ENCODE measurements at regions of chr2 and their contacts with region 1.

Region 1: DNA sequence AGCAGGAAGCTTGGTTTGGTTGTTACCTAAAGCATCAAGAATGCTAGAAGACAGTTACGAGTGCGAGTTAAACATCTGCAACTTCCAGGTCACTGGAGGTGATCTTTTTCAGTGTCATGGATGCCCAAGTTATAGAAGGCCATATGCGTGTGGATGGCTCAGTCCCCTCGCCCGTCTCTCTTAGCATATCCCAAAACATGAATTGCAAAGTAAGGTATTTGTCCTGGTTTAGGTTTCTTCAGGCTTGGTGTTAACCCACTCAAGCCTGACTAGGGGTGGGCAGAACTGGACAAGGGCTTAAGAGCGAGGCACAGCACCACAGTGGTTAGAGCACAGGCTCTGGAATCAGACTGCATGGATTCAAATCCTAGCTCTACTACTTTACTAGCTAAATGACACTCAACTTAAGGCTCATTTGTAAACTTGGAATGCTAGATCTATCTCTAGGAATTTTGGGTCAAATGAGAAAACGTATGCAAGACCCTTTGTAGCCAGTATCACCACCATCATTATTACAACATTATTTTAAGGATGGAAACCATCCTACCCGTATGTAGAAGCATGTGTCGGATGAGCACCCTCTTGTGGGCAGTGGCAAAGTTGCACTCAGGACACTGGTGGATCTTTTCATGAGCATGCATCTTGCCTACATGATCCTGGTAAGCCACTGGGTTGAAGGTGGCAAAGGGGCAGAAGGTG is 11.2 kb downstream of the ZNF142 start:
- DNase-seq: no peak
- H3K4me3 ChIP-seq: no peak overlapping the region
- CTCF ChIP-seq: peak; percentile 84

Region 2: GRCh38 chr2:218312267-218312756 is 335.9 kb before region 1 on chr2:
- CTCF ChIA-PET with region 1: no interaction called
- POLR2A ChIA-PET with region 1: no interaction called
- DNase-seq: no peak
- H3K4me3 ChIP-seq: no peak overlapping the region
- CTCF ChIP-seq: no peak

Region 3: GRCh38 chr2:218438601-218438995 is 209.6 kb before region 1 on chr2:
- CTCF ChIA-PET with region 1: no interaction called
- POLR2A ChIA-PET with region 1: no interaction called
- DNase-seq: no peak
- H3K4me3 ChIP-seq: no peak overlapping the region
- CTCF ChIP-seq: no peak

Region 4: GRCh38 chr2:218569038-218569431 is 79.2 kb before region 1 on chr2:
- CTCF ChIA-PET with region 1: interaction called, 10 read pairs
- POLR2A ChIA-PET with region 1: no interaction called
- DNase-seq: no peak
- H3K4me3 ChIP-seq: peak overlapping the region; percentile 78
- CTCF ChIP-seq: no peak

Region 5: GRCh38 chr2:218607436-218608115 is 40.7 kb before region 1 on chr2 and contains the start of gene PLCD4:
- CTCF ChIA-PET with region 1: interaction called, 10 read pairs
- POLR2A ChIA-PET with region 1: no interaction called
- DNase-seq: peak; percentile 16
- H3K4me3 ChIP-seq: peak within 1 kb of the TSS; percentile 51
- CTCF ChIP-seq: no peak

Region 6: GRCh38 chr2:218631837-218632236 is 16.4 kb before region 1 on chr2:
- CTCF ChIA-PET with region 1: interaction called, 15 read pairs
- POLR2A ChIA-PET with region 1: interaction called, 4 read pairs
- DNase-seq: no peak
- H3K4me3 ChIP-seq: no peak overlapping the region
- CTCF ChIP-seq: no peak

Region 7: DNA sequence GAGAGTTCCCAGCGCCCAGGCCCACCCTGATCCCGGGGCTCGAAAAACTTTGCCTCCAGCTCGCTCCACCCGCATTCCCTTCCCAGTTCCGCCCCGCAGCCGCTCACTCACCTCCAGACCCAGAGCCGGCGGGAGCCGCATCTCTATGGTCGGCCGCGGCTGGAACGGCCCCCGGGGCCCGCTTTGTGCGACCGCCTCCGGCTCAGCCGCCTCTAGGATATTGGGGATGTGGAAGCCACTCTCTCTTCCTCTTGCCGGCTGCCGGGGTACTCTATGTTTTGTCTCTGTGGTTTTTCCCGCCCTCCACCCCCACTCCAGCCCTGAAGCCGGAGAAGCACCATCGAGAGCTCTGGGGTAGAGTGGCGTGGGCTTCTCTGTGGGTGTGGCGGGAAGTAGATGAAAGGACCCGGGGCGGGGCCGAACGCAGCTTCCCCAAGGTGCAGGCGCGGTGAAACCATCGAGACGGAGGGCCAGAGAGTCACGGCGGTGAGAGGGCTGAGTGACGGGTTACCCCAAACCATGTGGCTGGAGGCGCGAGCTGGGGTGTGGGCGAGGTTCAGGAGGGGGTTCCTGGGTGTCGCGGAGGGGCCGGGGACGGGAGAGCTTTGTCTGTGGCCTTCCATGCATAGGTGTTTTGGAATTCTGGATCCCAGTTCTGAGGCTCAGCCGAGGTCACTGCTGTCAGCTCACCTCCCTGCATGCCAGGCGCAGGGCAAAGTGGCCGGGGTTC is 11.2 kb after region 1 on chr2 and contains the starts of genes BCS1L and ZNF142:
- CTCF ChIA-PET with region 1: interaction called, 95 read pairs
- POLR2A ChIA-PET with region 1: no interaction called
- DNase-seq: no peak
- H3K4me3 ChIP-seq: peak within 1 kb of the TSS; percentile 85
- CTCF ChIP-seq: no peak

Region 8: DNA sequence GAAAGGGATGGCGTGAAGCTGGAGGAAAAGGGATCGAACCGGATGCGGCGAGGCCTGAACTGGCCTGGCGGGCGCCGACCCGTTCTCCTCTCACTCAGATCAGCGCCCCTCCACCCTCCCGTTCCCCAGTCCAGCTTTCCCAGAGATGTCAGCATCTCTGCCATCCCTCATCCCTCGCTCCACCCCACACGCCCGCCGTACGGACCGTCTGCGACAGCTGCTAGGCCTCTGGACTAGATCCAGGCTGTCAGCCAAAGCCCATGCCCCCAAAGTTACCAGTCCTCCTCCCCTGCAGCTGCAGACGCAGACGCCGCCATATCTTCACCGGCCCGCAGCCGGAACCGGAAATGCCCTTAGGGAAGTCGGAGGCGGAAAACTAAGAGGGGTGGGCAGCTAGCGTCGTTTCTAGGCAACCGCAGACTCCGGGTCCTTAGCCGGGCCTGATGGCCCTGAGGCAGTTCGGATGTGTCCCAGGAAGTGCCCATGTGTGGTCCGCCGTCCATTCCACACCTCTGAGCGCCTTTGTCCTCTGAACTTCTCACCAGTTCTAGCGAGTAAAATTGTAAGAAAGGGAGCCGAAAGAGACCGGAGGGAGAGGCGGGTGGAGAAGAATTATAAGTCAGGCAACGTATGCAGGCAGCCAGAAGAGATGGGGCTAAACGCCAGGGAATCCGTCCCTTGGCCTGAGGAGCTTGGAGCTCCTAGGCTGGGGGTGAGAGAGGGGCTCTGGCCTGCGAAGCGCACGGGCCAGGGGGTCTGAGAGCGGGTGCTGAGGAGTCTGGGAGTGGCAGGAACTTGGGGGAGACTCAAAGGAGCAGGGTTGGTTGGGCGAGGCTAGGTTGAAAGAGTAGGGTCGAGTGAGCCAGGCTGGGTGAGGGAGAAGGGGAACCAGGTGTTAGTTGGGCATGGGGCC is 23.7 kb after region 1 on chr2 and contains the starts of genes RNF25 and STK36:
- CTCF ChIA-PET with region 1: interaction called, 10 read pairs
- POLR2A ChIA-PET with region 1: no interaction called
- DNase-seq: no peak
- H3K4me3 ChIP-seq: peak within 1 kb of the TSS; percentile 88
- CTCF ChIP-seq: no peak

Region 9: DNA sequence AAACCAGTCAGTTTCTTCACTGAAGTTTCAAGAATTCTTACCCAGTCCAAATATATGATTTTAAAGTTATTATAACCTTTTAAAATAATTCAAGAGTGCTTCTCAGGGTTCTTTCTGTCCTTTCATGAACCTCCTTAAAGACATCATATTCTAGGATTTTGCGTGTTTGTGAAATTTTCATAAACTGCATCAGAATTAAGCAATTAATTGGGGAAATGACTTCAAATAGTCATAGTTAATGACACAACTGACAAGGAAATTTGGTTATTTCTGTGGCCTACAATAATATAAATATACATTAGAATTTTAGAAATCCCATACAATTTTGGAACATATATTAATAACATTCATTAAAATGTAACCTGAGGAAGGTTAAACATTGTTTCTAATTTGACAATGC is 144.2 kb after region 1 on chr2:
- CTCF ChIA-PET with region 1: no interaction called
- POLR2A ChIA-PET with region 1: no interaction called
- DNase-seq: no peak
- H3K4me3 ChIP-seq: no peak overlapping the region
- CTCF ChIP-seq: no peak

Measured in AG04449 (cell line).